Posterior cingulate gyrus (tissue), 11 donors: ENCODE measurements at regions of chr20 and their contacts with region 1.

Region 1: GRCh38 chr20:1437235-1437904 is 29.3 kb downstream of the NSFL1C start:
- DNase-seq: peak; percentile 61 to 96 (median 79)

Region 2: GRCh38 chr20:1313236-1313964 is 124.0 kb before region 1 on chr20:
- intact Hi-C with region 1: loop called (anchors 1 kb)
- DNase-seq: peak; percentile 60 to 96 (median 82)